ENCODE measurements at regions of chr3 and their contacts with region 1.

Region 1: GRCh38 chr3:149765762-149766334 is 13.6 kb upstream of the COMMD2 start:
- DNase-seq: no peak
- ATAC-seq: no peak
- H3K4me3 ChIP-seq: no peak overlapping the region
- H3K27ac ChIP-seq: no peak overlapping the region
- H3K4me1 ChIP-seq: no peaks in the 10 kb centered on the region
- H3K27me3 ChIP-seq: no peaks in the 10 kb centered on the region

Region 2: DNA sequence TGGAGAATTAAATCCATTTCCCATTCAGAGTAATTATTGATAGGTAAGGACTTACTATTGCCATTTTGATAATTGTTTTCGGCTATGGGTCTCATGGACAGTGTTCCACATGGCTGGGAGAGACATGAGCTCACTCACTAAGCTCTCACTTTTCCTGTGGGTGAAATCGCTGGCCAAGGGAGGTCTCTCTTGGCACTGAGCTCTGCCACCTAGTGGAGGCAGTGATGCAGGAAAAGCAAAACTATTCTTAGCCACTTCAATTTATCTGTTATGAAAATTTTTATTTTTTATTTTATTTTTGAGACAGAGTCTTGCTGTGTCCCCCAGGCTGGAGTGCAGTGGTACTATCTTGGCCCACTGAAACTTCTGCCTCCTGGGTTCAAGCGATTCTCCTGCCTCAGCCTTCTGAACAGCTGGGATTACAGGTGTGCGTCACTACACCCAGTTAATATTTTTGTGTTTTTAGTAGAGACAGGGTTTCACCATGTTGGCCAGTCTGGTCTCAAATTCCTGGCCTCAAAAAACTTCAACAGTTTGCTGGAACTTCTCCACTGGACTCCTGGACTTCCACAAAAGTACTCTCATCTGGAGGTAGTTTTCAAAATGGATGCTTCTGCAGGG is 42.5 kb after region 1 on chr3:
- intact Hi-C with region 1: loop called (anchors 5 kb)
- DNase-seq: peak in 1 of 2 donors; percentile 80
- ATAC-seq: no peak
- H3K4me3 ChIP-seq: no peak overlapping the region
- H3K27ac ChIP-seq: no peak overlapping the region
- H3K4me1 ChIP-seq: no peaks in the 10 kb centered on the region
- H3K27me3 ChIP-seq: no peaks in the 10 kb centered on the region

Measured in aorta (tissue), 5 donors.